Common myeloid progenitor, CD34-positive (primary cell): ENCODE measurements at regions of chr20 and their contacts with region 1.

Region 1: DNA sequence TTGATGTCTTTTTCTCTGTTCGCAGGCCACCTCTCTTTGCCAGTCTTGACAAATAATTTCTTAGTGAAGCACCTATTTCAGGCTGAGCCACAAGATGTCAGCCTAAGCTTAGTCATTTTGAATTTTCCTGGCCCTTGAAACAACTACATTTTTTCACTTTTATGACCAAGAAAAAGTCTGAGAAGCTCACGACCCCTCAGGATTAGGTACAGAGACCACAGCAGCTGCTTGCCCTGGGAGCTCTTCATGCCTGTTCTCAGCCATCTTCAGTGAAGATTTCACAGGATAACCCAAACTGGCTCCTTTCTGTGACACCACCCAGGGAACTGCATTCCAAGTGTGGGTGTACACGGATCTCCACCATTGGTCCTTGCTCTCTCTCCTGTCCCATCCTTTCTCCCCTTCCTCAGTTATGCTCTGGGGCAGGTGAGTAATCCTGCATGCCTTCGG is 38.4 kb upstream of the SPTLC3 start:
- DNase-seq: peak; percentile 57 to 78 (median 70)
- H3K4me3 ChIP-seq: no peak overlapping the region
- H3K27ac ChIP-seq: no peak overlapping the region
- H3K4me1 ChIP-seq: no peaks in the 10 kb centered on the region
- H3K27me3 ChIP-seq: peaks cover 0 to 2% (median 0%) of the 10 kb centered on the region in 5 experiments

Region 2: GRCh38 chr20:12824328-12825225 is 145.8 kb before region 1 on chr20:
- CTCF ChIA-PET with region 1: no interaction called
- POLR2A ChIA-PET with region 1: no interaction called
- DNase-seq: no peak
- H3K4me3 ChIP-seq: no peak overlapping the region
- H3K27ac ChIP-seq: no peak overlapping the region
- H3K4me1 ChIP-seq: no peaks in the 10 kb centered on the region
- H3K27me3 ChIP-seq: peaks cover 0 to 2% (median 0%) of the 10 kb centered on the region in 5 experiments

Region 3: GRCh38 chr20:12925214-12925755 is 45.1 kb before region 1 on chr20:
- CTCF ChIA-PET with region 1: interaction called, 216 read pairs
- POLR2A ChIA-PET with region 1: no interaction called
- DNase-seq: peak; percentile 83 to 92 (median 92)
- H3K4me3 ChIP-seq: peak overlapping the region in 3 of 7 experiments; percentile 29 to 62 (median 38)
- H3K27ac ChIP-seq: no peak overlapping the region
- H3K4me1 ChIP-seq: peaks cover 7 to 47% (median 18%) of the 10 kb centered on the region in 4 experiments
- H3K27me3 ChIP-seq: peaks cover 0 to 4% (median 0%) of the 10 kb centered on the region in 5 experiments

Region 4: GRCh38 chr20:12956303-12956702 is 14.1 kb before region 1 on chr20:
- CTCF ChIA-PET with region 1: interaction called, 15 read pairs
- POLR2A ChIA-PET with region 1: no interaction called
- DNase-seq: no peak
- H3K4me3 ChIP-seq: no peak overlapping the region
- H3K27ac ChIP-seq: no peak overlapping the region
- H3K4me1 ChIP-seq: no peaks in the 10 kb centered on the region
- H3K27me3 ChIP-seq: no peaks in the 10 kb centered on the region

Region 5: GRCh38 chr20:13105864-13106457 is 135.6 kb after region 1 on chr20:
- CTCF ChIA-PET with region 1: interaction called, 55 read pairs
- POLR2A ChIA-PET with region 1: no interaction called
- DNase-seq: peak; percentile 43 to 68 (median 58)
- H3K4me3 ChIP-seq: no peak overlapping the region
- H3K27ac ChIP-seq: no peak overlapping the region
- H3K4me1 ChIP-seq: no peaks in the 10 kb centered on the region
- H3K27me3 ChIP-seq: peaks cover 0 to 10% (median 0%) of the 10 kb centered on the region in 5 experiments

Region 6: DNA sequence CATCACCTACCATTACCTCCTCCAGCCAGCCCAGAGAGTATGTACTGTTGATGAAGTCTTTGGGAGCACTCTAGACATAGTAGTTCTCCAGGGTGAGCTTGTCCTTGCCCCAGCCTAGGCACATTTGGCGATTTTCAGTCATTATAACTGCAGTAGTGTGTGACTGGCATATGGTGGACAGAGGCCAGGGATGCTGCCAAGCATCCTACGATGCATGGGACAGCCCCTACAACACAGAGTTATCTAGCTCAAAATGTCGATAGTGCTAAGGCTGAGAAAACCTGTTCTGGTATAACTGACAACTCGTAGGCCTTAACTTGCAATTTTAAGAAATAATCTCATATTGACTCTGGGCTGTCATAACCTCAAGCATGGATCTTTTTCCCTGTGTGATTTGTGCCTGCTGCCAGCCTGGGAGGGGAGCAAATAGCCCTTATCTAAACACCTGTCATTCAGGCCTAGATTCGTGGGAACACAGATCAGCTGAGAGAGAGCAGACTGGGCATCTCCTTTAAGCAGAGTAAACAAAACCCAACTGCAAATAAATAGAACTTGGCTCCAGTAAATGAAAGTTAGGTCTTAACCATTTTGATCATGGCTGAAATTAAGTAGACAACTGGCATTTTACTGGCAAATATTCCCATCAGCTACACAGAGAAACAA is 141.0 kb after region 1 on chr20:
- CTCF ChIA-PET with region 1: interaction called, 32 read pairs
- POLR2A ChIA-PET with region 1: no interaction called
- DNase-seq: no peak
- H3K4me3 ChIP-seq: no peak overlapping the region
- H3K27ac ChIP-seq: no peak overlapping the region
- H3K4me1 ChIP-seq: no peaks in the 10 kb centered on the region
- H3K27me3 ChIP-seq: peaks cover 0 to 3% (median 0%) of the 10 kb centered on the region in 5 experiments